ENCODE measurements at regions of chr1 and their contacts with region 1.

Region 1: GRCh38 chr1:244628789-244629188 is 24.1 kb upstream of the DESI2 start:
- DNase-seq: no peak
- H3K4me3 ChIP-seq: no peak overlapping the region
- H3K27ac ChIP-seq: no peak overlapping the region
- H3K4me1 ChIP-seq: no peaks in the 10 kb centered on the region
- H3K27me3 ChIP-seq: no peaks in the 10 kb centered on the region
- CTCF ChIP-seq: no peak

Region 2: GRCh38 chr1:244614113-244614836 is 14.5 kb before region 1 on chr1:
- CTCF ChIA-PET with region 1: no interaction called
- dilution Hi-C with region 1: no loop called
- in situ Hi-C with region 1: no loop called
- intact Hi-C with region 1: no loop called
- DNase-seq: no peak
- H3K4me3 ChIP-seq: no peak overlapping the region
- H3K27ac ChIP-seq: no peak overlapping the region
- H3K4me1 ChIP-seq: no peaks in the 10 kb centered on the region
- H3K27me3 ChIP-seq: no peaks in the 10 kb centered on the region
- CTCF ChIP-seq: no peak

Region 3: DNA sequence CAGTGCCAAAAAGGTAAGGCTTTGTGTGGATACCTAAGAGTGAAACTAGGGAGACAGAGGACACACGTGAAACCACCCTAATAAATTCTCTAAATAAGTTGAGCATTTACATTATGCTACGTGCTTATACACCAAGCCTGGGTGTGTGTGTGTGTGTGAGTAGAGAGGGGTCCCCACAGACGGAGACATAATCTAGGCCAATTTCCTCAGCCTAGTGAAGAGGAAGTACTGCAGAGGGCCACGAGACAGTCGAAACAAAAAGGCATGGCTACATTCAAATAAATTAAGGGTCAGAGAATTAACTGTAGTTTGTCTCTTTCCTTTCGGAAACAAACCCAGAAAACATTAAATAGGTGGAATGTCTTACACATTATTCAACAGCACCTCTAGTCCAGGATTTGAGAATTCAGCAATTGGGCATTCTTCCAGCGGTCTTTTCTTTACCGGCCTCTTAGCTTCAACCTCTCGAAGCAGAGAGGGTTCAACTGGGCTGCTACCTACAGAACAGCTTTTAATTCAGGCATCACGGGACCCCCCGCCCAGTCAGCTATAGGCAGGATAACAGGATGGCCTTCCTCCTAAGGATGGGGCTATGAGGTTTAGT is 99.2 kb after region 1 on chr1:
- CTCF ChIA-PET with region 1: no interaction called
- dilution Hi-C with region 1: loop called (anchors 5 kb)
- in situ Hi-C with region 1: no loop called
- intact Hi-C with region 1: no loop called
- DNase-seq: no peak
- H3K4me3 ChIP-seq: no peak overlapping the region
- H3K27ac ChIP-seq: no peak overlapping the region
- H3K4me1 ChIP-seq: peaks cover 11% of the 10 kb centered on the region
- H3K27me3 ChIP-seq: no peaks in the 10 kb centered on the region
- CTCF ChIP-seq: no peak

Measured in mammary epithelial cell (primary cell).